ENCODE measurements at regions of chr10 and their contacts with region 1.

Region 1: GRCh38 chr10:97072851-97073665 is 112.7 kb downstream of the SLIT1 start:
- DNase-seq: peak; percentile 9
- H3K4me3 ChIP-seq: no peak overlapping the region
- H3K27me3 ChIP-seq: peaks cover 9% of the 10 kb centered on the region
- CTCF ChIP-seq: peak; percentile 95

Region 2: DNA sequence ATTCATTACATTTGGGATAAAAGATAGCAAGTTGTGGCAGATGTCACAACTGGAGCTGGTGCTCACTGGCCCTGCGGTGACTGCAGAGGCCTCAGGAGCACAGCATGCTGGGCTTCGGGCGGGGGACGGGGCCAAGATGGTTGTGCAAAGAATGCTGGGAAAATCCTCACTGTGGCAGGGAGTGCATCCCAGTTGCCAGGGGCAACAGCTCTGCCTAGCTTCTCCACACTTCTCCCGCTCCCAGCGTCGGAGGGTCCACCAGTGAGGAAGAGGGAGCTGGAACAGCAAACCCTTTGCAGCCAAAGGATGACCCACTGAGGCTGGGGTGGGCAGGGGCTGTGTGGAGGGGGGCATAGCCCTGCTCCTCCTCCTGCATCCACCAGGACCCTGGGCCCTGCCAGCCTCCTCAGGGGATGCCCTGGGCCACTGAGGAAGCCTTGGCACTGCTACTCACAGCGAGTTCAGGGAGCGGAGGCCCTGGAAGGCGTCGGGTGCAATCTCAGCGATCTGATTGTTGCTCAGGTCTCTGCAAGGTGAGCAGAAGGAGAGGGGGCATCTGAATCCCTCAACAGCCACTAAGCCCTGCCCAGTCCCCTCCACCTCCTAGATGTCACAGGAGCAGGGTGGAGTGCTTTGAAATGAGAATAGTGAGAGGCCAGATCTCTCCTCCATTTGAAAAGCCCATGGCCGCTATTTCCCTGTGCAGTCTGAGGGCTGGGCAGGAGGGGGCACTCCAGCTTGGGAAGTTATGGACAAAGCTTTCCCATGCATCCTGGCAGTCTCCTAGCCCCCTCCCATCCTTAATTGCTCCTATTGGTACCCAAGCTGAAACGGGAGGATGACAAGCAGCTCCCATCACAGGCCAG is 13.8 kb before region 1 on chr10:
- CTCF ChIA-PET with region 1: interaction called, 27 read pairs
- POLR2A ChIA-PET with region 1: no interaction called
- DNase-seq: no peak
- H3K4me3 ChIP-seq: no peak overlapping the region
- H3K27me3 ChIP-seq: peaks cover 4% of the 10 kb centered on the region; the same call in 1 of the 2 replicates
- CTCF ChIP-seq: no peak

Region 3: DNA sequence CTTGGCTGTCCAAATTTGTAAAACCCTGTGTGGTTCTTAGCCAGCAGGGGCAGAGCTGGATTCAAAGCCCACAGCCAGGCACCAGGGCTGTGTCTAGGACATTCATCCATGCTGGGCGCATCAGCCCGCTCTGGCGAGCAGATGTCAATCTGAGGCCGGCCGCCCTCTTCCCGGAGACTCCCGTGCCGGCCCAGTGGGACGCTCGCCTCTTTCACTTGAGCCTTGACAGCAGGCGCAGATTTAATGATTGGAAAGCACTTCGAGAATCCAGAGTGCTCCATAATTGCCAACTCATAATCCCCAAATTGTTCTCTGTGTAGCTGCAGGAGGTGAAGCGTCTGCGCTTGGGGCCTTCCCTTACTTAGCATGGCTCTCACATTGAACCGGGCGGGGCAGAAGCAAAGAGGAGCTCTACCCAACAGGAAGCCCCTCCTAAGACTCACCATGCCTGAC is 76.0 kb after region 1 on chr10:
- CTCF ChIA-PET with region 1: no interaction called
- POLR2A ChIA-PET with region 1: no interaction called
- DNase-seq: no peak
- H3K4me3 ChIP-seq: no peak overlapping the region
- H3K27me3 ChIP-seq: no peaks in the 10 kb centered on the region
- CTCF ChIP-seq: no peak

Region 4: DNA sequence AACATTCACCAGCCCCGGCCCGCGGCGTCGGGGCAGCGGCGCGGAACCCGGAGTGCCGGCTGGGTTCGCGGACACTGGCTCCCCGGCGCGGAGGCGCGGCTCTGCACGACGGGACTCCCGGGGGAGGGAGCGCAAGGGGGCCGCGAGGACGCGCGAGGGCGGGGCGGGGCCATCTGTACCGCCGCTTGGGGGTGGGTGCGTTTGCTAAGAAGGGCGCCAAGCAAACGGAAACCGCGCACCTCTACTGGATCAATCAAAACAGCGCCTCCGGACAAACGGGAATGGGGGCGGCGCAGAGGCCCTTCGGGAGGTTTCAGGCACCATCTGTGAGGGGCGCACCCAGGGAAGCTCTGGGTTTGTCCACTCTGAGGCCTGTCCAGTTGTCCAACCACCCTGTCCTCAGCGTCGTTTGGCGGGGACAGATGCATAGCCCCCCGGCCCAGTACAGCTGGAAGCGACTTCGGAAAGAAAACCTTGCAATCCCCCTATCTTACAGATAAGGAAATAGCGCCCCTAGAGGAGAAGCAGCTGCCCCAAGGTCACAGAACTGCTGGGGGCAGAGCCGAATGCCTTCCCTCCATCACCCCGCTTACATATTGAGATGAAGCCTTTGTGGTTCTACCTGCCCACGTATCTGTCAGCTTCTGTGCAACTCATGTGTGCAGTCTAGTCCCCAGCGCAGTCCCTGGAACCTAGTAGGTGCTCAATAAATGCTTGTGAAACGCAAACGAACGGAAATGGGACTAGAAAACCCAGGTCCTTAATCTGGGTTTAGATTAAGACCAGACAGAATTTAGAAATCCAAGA is 123.4 kb after region 1 on chr10:
- CTCF ChIA-PET with region 1: interaction called, 18 read pairs
- POLR2A ChIA-PET with region 1: no interaction called
- DNase-seq: no peak
- H3K4me3 ChIP-seq: peak overlapping the region; percentile 44
- H3K27me3 ChIP-seq: peaks cover 10% of the 10 kb centered on the region
- CTCF ChIP-seq: peak; percentile 76

Region 5: DNA sequence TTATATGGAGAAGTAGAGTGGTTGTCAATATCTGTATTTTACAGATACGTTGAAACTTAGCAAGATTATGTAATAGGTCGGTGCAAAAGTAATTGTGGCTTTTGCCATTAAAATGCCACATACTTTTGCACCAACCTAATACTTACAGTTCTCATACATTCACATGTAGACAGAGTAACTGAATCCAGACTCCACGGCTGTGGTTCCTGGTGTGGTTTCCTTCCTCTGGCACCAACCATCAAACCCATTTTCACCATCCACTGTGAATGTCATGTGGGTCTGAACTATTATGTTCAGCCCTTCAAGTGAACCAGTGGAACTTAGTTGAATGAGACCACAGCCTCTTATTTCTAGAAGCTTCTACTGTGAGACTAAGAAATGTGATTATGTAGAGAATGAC is 144.2 kb after region 1 on chr10:
- CTCF ChIA-PET with region 1: interaction called, 188 read pairs
- POLR2A ChIA-PET with region 1: interaction called, 4 read pairs
- DNase-seq: no peak
- H3K4me3 ChIP-seq: no peak overlapping the region
- H3K27me3 ChIP-seq: no peaks in the 10 kb centered on the region
- CTCF ChIP-seq: no peak